ENCODE measurements at regions of chr2 and their contacts with region 1.

Region 1: GRCh38 chr2:197310271-197310985 is at the start of gene ANKRD44:
- DNase-seq: peak; percentile 94
- ATAC-seq: peak; percentile 78
- H3K4me3 ChIP-seq: peak within 1 kb of the TSS; percentile 73 to 97 (median 92)
- H3K4me3 Mint-ChIP-seq: peak within 1 kb of the TSS; percentile 97
- H3K27ac ChIP-seq: peak within 1 kb of the TSS; percentile 80 to 86
- H3K27ac Mint-ChIP-seq: peak within 1 kb of the TSS; percentile 95
- H3K4me1 ChIP-seq: peaks cover 34 to 35% of the 10 kb centered on the region in 2 donors
- H3K4me1 Mint-ChIP-seq: peaks cover 44% of the 10 kb centered on the region
- H3K27me3 ChIP-seq: no peaks in the 10 kb centered on the region
- H3K27me3 Mint-ChIP-seq: no peaks in the 10 kb centered on the region
- CTCF ChIP-seq: peak; percentile 34
- total RNA-seq, gene ANKRD44: 450 and 457 TPM in 2 replicates

Region 2: DNA sequence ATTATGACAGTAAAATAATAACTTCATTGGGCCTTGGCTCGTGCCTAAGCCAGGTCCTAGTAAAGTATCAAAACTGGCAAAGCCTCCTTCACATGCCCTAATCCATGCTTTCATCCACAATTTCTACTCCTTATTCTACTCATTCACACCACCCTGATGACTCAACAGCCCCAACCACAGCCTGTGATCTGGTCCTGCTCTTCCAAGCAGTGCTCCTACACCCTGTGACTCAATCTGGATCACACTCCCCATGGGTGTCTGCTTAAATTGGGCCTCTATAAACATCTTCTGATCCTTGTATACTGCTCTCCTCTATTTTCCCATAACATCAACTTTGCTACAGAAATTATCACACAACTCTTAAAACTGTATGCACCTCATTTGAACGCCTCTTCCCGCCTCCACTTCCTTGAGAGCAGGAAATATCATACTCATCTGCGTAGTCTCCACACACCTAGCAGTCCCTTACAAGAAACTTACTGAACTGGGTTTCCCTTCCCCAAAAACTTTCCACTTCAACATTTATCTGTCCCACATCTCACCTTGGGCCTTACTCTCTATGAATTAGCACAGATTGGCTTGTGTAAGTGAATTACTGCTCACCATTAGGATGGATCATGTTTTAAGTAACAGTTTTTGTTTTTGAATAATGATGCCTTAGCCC is 526.9 kb before region 1 on chr2:
- CTCF ChIA-PET with region 1: no interaction called
- POLR2A ChIA-PET with region 1: no interaction called
- intact Hi-C with region 1: no loop called
- DNase-seq: no peak
- ATAC-seq: no peak
- H3K4me3 ChIP-seq: no peak overlapping the region
- H3K4me3 Mint-ChIP-seq: no peak overlapping the region
- H3K27ac ChIP-seq: no peak overlapping the region
- H3K27ac Mint-ChIP-seq: no peak overlapping the region
- H3K4me1 ChIP-seq: no peaks in the 10 kb centered on the region
- H3K4me1 Mint-ChIP-seq: no peaks in the 10 kb centered on the region
- H3K27me3 ChIP-seq: no peaks in the 10 kb centered on the region
- H3K27me3 Mint-ChIP-seq: no peaks in the 10 kb centered on the region
- CTCF ChIP-seq: no peak

Region 3: GRCh38 chr2:197145471-197146138 is 164.8 kb before region 1 on chr2:
- CTCF ChIA-PET with region 1: interaction called, 9 read pairs
- POLR2A ChIA-PET with region 1: interaction called, 10 read pairs
- intact Hi-C with region 1: no loop called
- DNase-seq: peak; percentile 93
- ATAC-seq: peak; percentile 88
- H3K4me3 ChIP-seq: no peak overlapping the region
- H3K4me3 Mint-ChIP-seq: peak overlapping the region; percentile 76
- H3K27ac ChIP-seq: peak overlapping the region; percentile 93 to 98
- H3K27ac Mint-ChIP-seq: peak overlapping the region; percentile 99
- H3K4me1 ChIP-seq: peaks cover 87 to 88% of the 10 kb centered on the region in 2 donors
- H3K4me1 Mint-ChIP-seq: peaks cover 82% of the 10 kb centered on the region
- H3K27me3 ChIP-seq: no peaks in the 10 kb centered on the region
- H3K27me3 Mint-ChIP-seq: no peaks in the 10 kb centered on the region
- CTCF ChIP-seq: no peak

Region 4: GRCh38 chr2:197191177-197191939 is 119.1 kb before region 1 on chr2:
- CTCF ChIA-PET with region 1: interaction called, 336 read pairs
- POLR2A ChIA-PET with region 1: interaction called, 18 read pairs
- intact Hi-C with region 1: loop called (anchors 1 kb)
- DNase-seq: peak; percentile 83
- ATAC-seq: peak; percentile 75
- H3K4me3 ChIP-seq: no peak overlapping the region
- H3K4me3 Mint-ChIP-seq: peak overlapping the region; percentile 2
- H3K27ac ChIP-seq: peak overlapping the region; percentile 27 to 62
- H3K27ac Mint-ChIP-seq: peak overlapping the region; percentile 80
- H3K4me1 ChIP-seq: peaks cover 47 to 53% of the 10 kb centered on the region in 2 donors
- H3K4me1 Mint-ChIP-seq: peaks cover 78% of the 10 kb centered on the region
- H3K27me3 ChIP-seq: no peaks in the 10 kb centered on the region
- H3K27me3 Mint-ChIP-seq: no peaks in the 10 kb centered on the region
- CTCF ChIP-seq: peak; percentile 85

Region 5: GRCh38 chr2:197209742-197210408 is 100.6 kb before region 1 on chr2:
- CTCF ChIA-PET with region 1: interaction called, 29 read pairs
- POLR2A ChIA-PET with region 1: interaction called, 29 read pairs
- intact Hi-C with region 1: no loop called
- DNase-seq: peak; percentile 74
- ATAC-seq: peak; percentile 37
- H3K4me3 ChIP-seq: peak overlapping the region in 3 of 5 experiments; percentile 10 to 27 (median 21)
- H3K4me3 Mint-ChIP-seq: peak overlapping the region; percentile 84
- H3K27ac ChIP-seq: peak overlapping the region; percentile 94 to 95
- H3K27ac Mint-ChIP-seq: peak overlapping the region; percentile 99
- H3K4me1 ChIP-seq: peaks cover 92 to 99% of the 10 kb centered on the region in 2 donors
- H3K4me1 Mint-ChIP-seq: peaks cover 96% of the 10 kb centered on the region
- H3K27me3 ChIP-seq: no peaks in the 10 kb centered on the region
- H3K27me3 Mint-ChIP-seq: no peaks in the 10 kb centered on the region
- CTCF ChIP-seq: no peak

Region 6: GRCh38 chr2:197261808-197262226 is 48.6 kb before region 1 on chr2:
- CTCF ChIA-PET with region 1: interaction called, 40 read pairs
- POLR2A ChIA-PET with region 1: interaction called, 7 read pairs
- intact Hi-C with region 1: loop called (anchors 1 kb)
- DNase-seq: peak; percentile 70
- ATAC-seq: peak; percentile 77
- H3K4me3 ChIP-seq: peak overlapping the region in 1 of 5 experiments; percentile 26
- H3K4me3 Mint-ChIP-seq: peak overlapping the region; percentile 80
- H3K27ac ChIP-seq: peak overlapping the region; percentile 52 to 89
- H3K27ac Mint-ChIP-seq: peak overlapping the region; percentile 87
- H3K4me1 ChIP-seq: peaks cover 79 to 83% of the 10 kb centered on the region in 2 donors
- H3K4me1 Mint-ChIP-seq: peaks cover 77% of the 10 kb centered on the region
- H3K27me3 ChIP-seq: no peaks in the 10 kb centered on the region
- H3K27me3 Mint-ChIP-seq: no peaks in the 10 kb centered on the region
- CTCF ChIP-seq: no peak

Region 7: GRCh38 chr2:197360744-197361156 is 50.3 kb after region 1 on chr2:
- CTCF ChIA-PET with region 1: no interaction called
- POLR2A ChIA-PET with region 1: no interaction called
- intact Hi-C with region 1: no loop called
- DNase-seq: no peak
- ATAC-seq: no peak
- H3K4me3 ChIP-seq: no peak overlapping the region
- H3K4me3 Mint-ChIP-seq: no peak overlapping the region
- H3K27ac ChIP-seq: no peak overlapping the region
- H3K27ac Mint-ChIP-seq: no peak overlapping the region
- H3K4me1 ChIP-seq: no peaks in the 10 kb centered on the region
- H3K4me1 Mint-ChIP-seq: no peaks in the 10 kb centered on the region
- H3K27me3 ChIP-seq: no peaks in the 10 kb centered on the region
- H3K27me3 Mint-ChIP-seq: no peaks in the 10 kb centered on the region
- CTCF ChIP-seq: no peak

Region 8: DNA sequence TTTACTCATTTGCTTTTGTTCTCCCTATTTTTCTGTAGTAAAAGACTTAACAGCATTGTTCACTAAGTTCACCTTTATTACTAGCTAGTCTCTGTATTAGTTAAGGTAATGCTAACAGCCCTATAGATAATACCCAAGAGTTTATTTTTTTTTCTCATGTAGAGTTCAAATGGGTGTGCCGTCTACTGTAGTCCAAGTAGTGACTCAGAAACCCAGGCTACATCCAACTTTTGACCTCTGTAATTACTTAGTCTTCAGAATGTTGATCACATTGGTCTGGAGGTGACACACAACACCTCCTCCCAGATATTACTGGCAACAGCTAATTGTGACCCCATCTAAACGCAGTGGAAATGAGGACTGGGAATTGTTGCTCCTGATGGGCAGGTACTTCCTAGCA is 150.6 kb after region 1 on chr2:
- CTCF ChIA-PET with region 1: no interaction called
- POLR2A ChIA-PET with region 1: no interaction called
- intact Hi-C with region 1: no loop called
- DNase-seq: no peak
- ATAC-seq: no peak
- H3K4me3 ChIP-seq: no peak overlapping the region
- H3K4me3 Mint-ChIP-seq: no peak overlapping the region
- H3K27ac ChIP-seq: no peak overlapping the region
- H3K27ac Mint-ChIP-seq: no peak overlapping the region
- H3K4me1 ChIP-seq: no peaks in the 10 kb centered on the region
- H3K4me1 Mint-ChIP-seq: peaks cover 14% of the 10 kb centered on the region
- H3K27me3 ChIP-seq: no peaks in the 10 kb centered on the region
- H3K27me3 Mint-ChIP-seq: no peaks in the 10 kb centered on the region
- CTCF ChIP-seq: no peak

Measured in B cell (primary cell).